HepG2 (cell line): ENCODE measurements at regions of chr16 and their contacts with region 1.

Region 1: DNA sequence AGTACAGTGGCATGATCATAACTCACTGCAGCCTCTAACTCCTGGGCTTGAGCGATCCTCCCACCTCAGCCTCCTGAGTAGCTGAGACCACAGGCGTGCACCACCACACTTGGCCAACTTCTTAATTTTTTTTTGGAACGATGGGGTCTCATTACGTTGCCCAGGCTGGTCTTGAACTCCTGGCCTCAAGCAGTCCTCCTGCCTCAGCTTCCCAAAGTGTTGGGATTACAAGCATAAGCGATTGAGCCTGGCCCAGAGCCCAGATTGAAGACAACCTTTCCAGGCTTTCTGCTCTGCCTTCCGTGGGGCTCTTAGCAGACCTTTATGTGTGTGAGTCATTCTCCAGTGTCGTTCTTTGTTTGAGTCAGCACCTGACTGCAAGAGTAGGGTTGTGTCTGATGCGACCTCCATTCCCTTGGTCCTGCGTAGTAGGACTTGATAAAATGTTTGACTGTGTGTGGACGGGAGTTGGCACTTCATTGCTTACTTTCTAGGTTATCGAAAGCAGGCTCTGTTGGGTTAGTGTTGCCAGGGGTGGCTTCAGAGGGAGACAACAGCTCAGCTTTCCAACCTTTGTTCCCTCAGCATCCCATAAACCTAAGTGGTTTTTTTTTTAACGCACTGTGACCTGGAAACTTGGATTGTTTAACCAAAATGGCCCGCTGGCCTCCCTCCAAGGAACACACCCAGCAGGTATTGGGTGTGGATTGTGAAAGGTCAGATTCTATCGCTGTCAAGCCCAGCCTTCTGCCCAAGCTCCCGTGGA is 26.4 kb downstream of the EEF2K start:
- DNase-seq: peak; percentile 93
- ATAC-seq: peak; percentile 93
- H3K4me3 ChIP-seq: peak overlapping the region in 2 of 3 experiments; percentile 8 to 30; a peak in 4 of 6 replicates
- H3K27ac ChIP-seq: peak overlapping the region; percentile 81
- H3K4me1 ChIP-seq: peaks cover 18% of the 10 kb centered on the region
- H3K27me3 ChIP-seq: no peaks in the 10 kb centered on the region
- CTCF ChIP-seq: 0 out of 2 replicates have a peak, but pooled peaks have one; percentile 11
- EP300 ChIP-seq: no peak; a peak in 1 of 4 replicates
- POLR2A ChIP-seq: no peak
- RAD21 ChIP-seq: no peak; the same call in 1 of the 2 replicates

Region 2: GRCh38 chr16:22198547-22199293 is 33.7 kb before region 1 on chr16:
- CTCF ChIA-PET with region 1: no interaction called
- POLR2A ChIA-PET with region 1: no interaction called
- in situ Hi-C with region 1: no loop called
- intact Hi-C with region 1: loop called (anchors 2 kb)
- DNase-seq: no peak
- ATAC-seq: peak; percentile 52
- H3K4me3 ChIP-seq: peak overlapping the region; percentile 3 to 55 (median 5); a peak in 4 of 6 replicates
- H3K27ac ChIP-seq: no peak overlapping the region
- H3K4me1 ChIP-seq: peaks cover 79% of the 10 kb centered on the region
- H3K27me3 ChIP-seq: no peaks in the 10 kb centered on the region; a peak in 1 of 5 replicates
- CTCF ChIP-seq: peak; percentile 45
- EP300 ChIP-seq: no peak
- POLR2A ChIP-seq: no peak
- RAD21 ChIP-seq: peak; percentile 13; the same call in 1 of the 2 replicates

Region 3: GRCh38 chr16:22272870-22273595 is 40.6 kb after region 1 on chr16:
- CTCF ChIA-PET with region 1: no interaction called
- POLR2A ChIA-PET with region 1: no interaction called
- in situ Hi-C with region 1: no loop called
- intact Hi-C with region 1: no loop called
- DNase-seq: no peak
- ATAC-seq: no peak; the same call in 2 of the 3 replicates
- H3K4me3 ChIP-seq: no peak overlapping the region
- H3K27ac ChIP-seq: no peak overlapping the region
- H3K4me1 ChIP-seq: no peaks in the 10 kb centered on the region
- H3K27me3 ChIP-seq: no peaks in the 10 kb centered on the region
- CTCF ChIP-seq: no peak
- EP300 ChIP-seq: no peak
- POLR2A ChIP-seq: no peak
- RAD21 ChIP-seq: no peak